Activated naive CD4-positive, alpha-beta T cell treated with anti-CD3 and anti-CD28 coated beads for 36 hours (primary cell): ENCODE measurements at regions of chr10 and their contacts with region 1.

Region 1: GRCh38 chr10:73926152-73926764 is 15.3 kb downstream of the PLAU start:
- DNase-seq: no peak
- H3K4me3 Mint-ChIP-seq: no peak overlapping the region
- H3K27ac Mint-ChIP-seq: no peak overlapping the region
- H3K4me1 Mint-ChIP-seq: peaks cover 14% of the 10 kb centered on the region
- H3K27me3 Mint-ChIP-seq: peaks cover 28% of the 10 kb centered on the region

Region 2: DNA sequence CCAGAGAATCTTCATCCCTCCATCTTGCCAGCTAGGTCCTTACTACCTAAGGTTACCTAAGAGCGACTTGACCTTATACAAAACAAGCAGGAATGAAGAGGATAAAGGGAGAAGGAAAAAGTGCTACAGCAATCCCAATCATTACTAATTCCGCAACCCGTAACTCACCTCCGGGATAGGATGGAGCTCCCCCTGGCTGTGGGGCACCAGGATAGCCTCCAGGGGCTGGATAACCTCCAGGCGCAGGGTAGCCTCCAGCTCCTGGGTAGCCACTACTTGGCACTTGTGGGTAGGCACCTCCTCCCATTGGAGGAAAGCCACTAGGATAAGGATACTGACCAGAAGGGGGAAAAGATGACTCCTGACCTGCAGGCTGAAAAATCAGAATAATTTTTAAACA is 528.2 kb before region 1 on chr10:
- CTCF ChIA-PET with region 1: no interaction called
- intact Hi-C with region 1: no loop called
- DNase-seq: no peak
- H3K4me3 Mint-ChIP-seq: no peak overlapping the region
- H3K27ac Mint-ChIP-seq: no peak overlapping the region
- H3K4me1 Mint-ChIP-seq: peaks cover 4% of the 10 kb centered on the region
- H3K27me3 Mint-ChIP-seq: no peaks in the 10 kb centered on the region

Region 3: GRCh38 chr10:73908853-73909538 is 17.3 kb before region 1 on chr10:
- CTCF ChIA-PET with region 1: no interaction called
- intact Hi-C with region 1: loop called (anchors 1 kb)
- DNase-seq: peak; percentile 86
- H3K4me3 Mint-ChIP-seq: peak overlapping the region; percentile 20
- H3K27ac Mint-ChIP-seq: peak overlapping the region; percentile 7
- H3K4me1 Mint-ChIP-seq: peaks cover 34% of the 10 kb centered on the region
- H3K27me3 Mint-ChIP-seq: peaks cover 38% of the 10 kb centered on the region

Region 4: GRCh38 chr10:74227697-74228424 is 301.6 kb after region 1 on chr10:
- CTCF ChIA-PET with region 1: no interaction called
- intact Hi-C with region 1: no loop called
- DNase-seq: no peak
- H3K4me3 Mint-ChIP-seq: no peak overlapping the region
- H3K27ac Mint-ChIP-seq: peak overlapping the region; percentile 59
- H3K4me1 Mint-ChIP-seq: peaks cover 22% of the 10 kb centered on the region
- H3K27me3 Mint-ChIP-seq: no peaks in the 10 kb centered on the region